ENCODE measurements at regions of chr5 and their contacts with region 1.

Region 1: DNA sequence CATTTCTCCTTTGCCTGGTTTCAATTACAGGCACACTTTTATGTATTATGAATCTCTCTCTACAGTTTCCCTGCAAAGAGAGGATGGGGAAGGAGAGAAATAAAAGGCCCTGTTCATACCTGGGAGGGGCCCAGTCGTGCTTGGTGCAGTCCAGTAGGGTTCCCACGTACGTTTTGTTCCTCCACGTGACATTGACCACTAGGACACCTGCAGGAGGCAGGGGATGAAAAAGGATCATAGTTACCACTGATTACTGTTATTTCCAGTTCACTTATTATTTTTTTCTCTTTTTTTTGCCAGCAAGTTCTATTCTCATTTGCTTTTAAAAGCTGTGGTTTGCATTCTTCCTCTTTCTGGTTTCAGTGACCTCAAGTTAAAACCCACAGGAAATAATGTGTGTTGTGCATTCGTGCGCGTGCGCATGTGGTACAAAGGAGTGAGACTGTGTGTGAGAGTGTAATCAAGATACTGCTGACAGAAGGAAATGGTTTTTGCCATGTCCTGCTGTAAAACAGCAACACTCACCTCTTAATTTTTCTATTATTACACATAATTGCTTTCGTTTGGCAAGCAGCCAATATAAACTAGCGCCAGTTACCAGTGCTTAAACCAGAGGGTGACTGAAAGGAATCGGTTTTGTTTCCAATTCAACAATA is 96.8 kb downstream of the ZNF608 start:
- DNase-seq: peak; percentile 70
- ATAC-seq: peak; percentile 76
- H3K4me3 Mint-ChIP-seq: peak overlapping the region; percentile 66
- H3K27ac Mint-ChIP-seq: peak overlapping the region; percentile 84
- H3K4me1 Mint-ChIP-seq: peaks cover 78% of the 10 kb centered on the region
- H3K27me3 Mint-ChIP-seq: no peaks in the 10 kb centered on the region
- CTCF ChIP-seq: no peak

Region 2: GRCh38 chr5:123937230-123937629 is 712.4 kb before region 1 on chr5:
- CTCF ChIA-PET with region 1: no interaction called
- POLR2A ChIA-PET with region 1: no interaction called
- intact Hi-C with region 1: loop called (anchors 5 kb)
- DNase-seq: peak; percentile 24
- ATAC-seq: no peak
- H3K4me3 Mint-ChIP-seq: no peak overlapping the region
- H3K27ac Mint-ChIP-seq: no peak overlapping the region
- H3K4me1 Mint-ChIP-seq: peaks cover 5% of the 10 kb centered on the region
- H3K27me3 Mint-ChIP-seq: no peaks in the 10 kb centered on the region
- CTCF ChIP-seq: peak; percentile 53

Region 3: GRCh38 chr5:124410539-124411488 is 238.8 kb before region 1 on chr5:
- CTCF ChIA-PET with region 1: no interaction called
- POLR2A ChIA-PET with region 1: no interaction called
- intact Hi-C with region 1: loop called (anchors 1 kb)
- DNase-seq: no peak
- ATAC-seq: peak; percentile 96
- H3K4me3 Mint-ChIP-seq: peak overlapping the region; percentile 51
- H3K27ac Mint-ChIP-seq: no peak overlapping the region
- H3K4me1 Mint-ChIP-seq: peaks cover 24% of the 10 kb centered on the region
- H3K27me3 Mint-ChIP-seq: peaks cover 3% of the 10 kb centered on the region
- CTCF ChIP-seq: no peak

Region 4: GRCh38 chr5:124583469-124584350 is 65.9 kb before region 1 on chr5:
- CTCF ChIA-PET with region 1: no interaction called
- POLR2A ChIA-PET with region 1: interaction called, 17 read pairs
- intact Hi-C with region 1: loop called (anchors 1 kb)
- DNase-seq: peak; percentile 23
- ATAC-seq: peak; percentile 89
- H3K4me3 Mint-ChIP-seq: peak overlapping the region; percentile 61
- H3K27ac Mint-ChIP-seq: peak overlapping the region; percentile 94
- H3K4me1 Mint-ChIP-seq: peaks cover 36% of the 10 kb centered on the region
- H3K27me3 Mint-ChIP-seq: no peaks in the 10 kb centered on the region
- CTCF ChIP-seq: no peak

Region 5: DNA sequence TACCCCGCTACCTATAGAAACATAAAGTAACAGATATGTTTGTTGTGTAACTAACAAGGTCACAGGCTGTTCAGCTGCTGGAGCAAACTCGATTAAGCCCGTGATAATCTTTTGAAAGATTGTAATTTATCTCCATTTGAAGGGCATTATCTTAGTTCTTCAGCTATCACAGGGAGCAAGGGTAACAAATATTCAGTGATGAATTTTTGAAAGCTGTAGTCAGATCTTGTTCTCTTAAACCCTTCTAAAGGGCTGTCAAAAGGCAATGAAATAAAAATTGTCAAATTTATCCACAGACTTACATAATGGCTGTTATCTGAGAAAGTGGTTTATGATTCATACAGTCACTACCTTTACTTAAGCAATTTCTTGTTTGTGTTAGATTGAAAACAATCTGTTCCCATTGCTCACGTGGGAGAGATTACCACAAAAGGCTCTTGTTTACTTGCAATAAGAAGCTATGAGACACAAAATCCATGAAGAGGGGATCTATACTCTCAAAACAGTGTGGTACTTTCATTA is 175.1 kb after region 1 on chr5:
- CTCF ChIA-PET with region 1: no interaction called
- POLR2A ChIA-PET with region 1: no interaction called
- intact Hi-C with region 1: loop called (anchors 1 kb)
- DNase-seq: no peak
- ATAC-seq: no peak
- H3K4me3 Mint-ChIP-seq: no peak overlapping the region
- H3K27ac Mint-ChIP-seq: peak overlapping the region; percentile 74
- H3K4me1 Mint-ChIP-seq: peaks cover 17% of the 10 kb centered on the region
- H3K27me3 Mint-ChIP-seq: no peaks in the 10 kb centered on the region
- CTCF ChIP-seq: no peak

Region 6: DNA sequence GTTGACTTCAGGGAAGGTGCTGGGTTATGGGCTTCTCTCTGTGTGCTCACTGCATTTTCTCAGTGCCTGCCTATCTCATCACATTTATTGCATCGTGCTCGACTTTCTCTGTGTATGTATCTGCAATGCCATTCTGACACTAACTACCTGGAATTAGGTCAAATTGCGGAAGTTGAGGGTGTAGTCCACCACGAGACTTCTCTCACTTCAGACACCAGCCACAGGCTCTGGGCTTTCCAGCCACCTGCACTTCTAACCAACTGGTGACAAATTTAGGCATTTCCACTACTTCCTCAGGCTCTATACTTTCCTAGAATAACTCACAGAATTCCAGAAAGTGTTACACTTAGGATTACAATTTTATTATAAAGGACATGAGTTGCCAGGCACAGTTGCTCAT is 285.4 kb after region 1 on chr5:
- CTCF ChIA-PET with region 1: no interaction called
- POLR2A ChIA-PET with region 1: interaction called, 3 read pairs
- intact Hi-C with region 1: loop called (anchors 1 kb)
- DNase-seq: no peak
- ATAC-seq: peak; percentile 63
- H3K4me3 Mint-ChIP-seq: peak overlapping the region; percentile 38
- H3K27ac Mint-ChIP-seq: peak overlapping the region; percentile 94
- H3K4me1 Mint-ChIP-seq: peaks cover 24% of the 10 kb centered on the region
- H3K27me3 Mint-ChIP-seq: no peaks in the 10 kb centered on the region
- CTCF ChIP-seq: no peak

Region 7: GRCh38 chr5:125835293-125836172 is 1185.9 kb after region 1 on chr5:
- CTCF ChIA-PET with region 1: no interaction called
- POLR2A ChIA-PET with region 1: no interaction called
- intact Hi-C with region 1: loop called (anchors 5 kb)
- DNase-seq: no peak
- ATAC-seq: peak; percentile 56
- H3K4me3 Mint-ChIP-seq: no peak overlapping the region
- H3K27ac Mint-ChIP-seq: no peak overlapping the region
- H3K4me1 Mint-ChIP-seq: peaks cover 3% of the 10 kb centered on the region
- H3K27me3 Mint-ChIP-seq: peaks cover 6% of the 10 kb centered on the region
- CTCF ChIP-seq: no peak